MCF 10A (cell line): ENCODE measurements at regions of chr19 and their contacts with region 1.

Region 1: DNA sequence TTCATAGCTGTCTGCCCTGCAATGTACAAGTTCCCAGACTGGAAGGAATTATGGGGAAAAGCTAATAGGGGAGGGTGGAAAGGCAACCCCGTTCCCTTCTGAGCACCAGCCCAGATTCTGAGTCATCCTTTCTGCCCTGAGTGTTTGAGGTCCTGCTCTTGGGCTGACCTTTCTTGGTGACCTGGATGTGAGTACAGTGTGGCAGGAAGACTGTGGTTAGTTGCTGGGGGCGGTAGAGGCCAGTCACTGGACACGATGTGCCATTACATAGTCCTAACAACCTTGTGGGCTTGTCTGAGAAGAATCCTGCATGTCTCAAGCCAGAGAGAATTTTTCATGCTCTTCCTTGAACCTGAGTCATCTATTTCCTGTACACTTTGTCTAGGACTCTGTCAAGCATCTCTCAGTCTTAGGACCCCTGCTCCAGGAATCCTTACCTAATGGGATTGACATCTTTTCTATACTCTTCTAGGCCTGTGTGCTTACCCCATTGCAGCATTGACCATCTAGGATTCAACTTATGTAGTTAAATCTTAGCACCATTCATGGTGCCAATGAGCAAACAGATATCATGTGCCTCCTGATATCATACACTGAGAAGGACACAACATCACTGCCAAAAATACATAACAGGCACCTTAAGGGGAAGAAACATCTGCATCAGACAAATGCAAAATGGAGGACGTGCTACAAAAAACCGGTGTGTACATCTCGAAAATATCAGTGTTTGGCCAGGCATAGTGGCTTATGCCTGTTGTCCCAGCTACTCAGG is 8.1 kb upstream of the ANGPTL4 start:
- DNase-seq: peak; percentile 99
- H3K4me3 Mint-ChIP-seq: no peak overlapping the region
- H3K27ac Mint-ChIP-seq: peak overlapping the region; percentile 21
- H3K4me1 Mint-ChIP-seq: peaks cover 20% of the 10 kb centered on the region
- H3K27me3 Mint-ChIP-seq: no peaks in the 10 kb centered on the region
- CTCF ChIP-seq: no peak

Region 2: GRCh38 chr19:8342684-8343482 is 12.9 kb before region 1 on chr19 and contains the start of gene KANK3:
- CTCF ChIA-PET with region 1: interaction called, 20 read pairs
- POLR2A ChIA-PET with region 1: no interaction called
- intact Hi-C with region 1: no loop called
- DNase-seq: no peak
- H3K4me3 Mint-ChIP-seq: no peak within 1 kb of the TSS
- H3K27ac Mint-ChIP-seq: no peak within 1 kb of the TSS
- H3K4me1 Mint-ChIP-seq: no peaks in the 10 kb centered on the region
- H3K27me3 Mint-ChIP-seq: no peaks in the 10 kb centered on the region
- CTCF ChIP-seq: no peak
- total RNA-seq, gene KANK3: 0.79 and 1.2 TPM in 2 replicates

Region 3: DNA sequence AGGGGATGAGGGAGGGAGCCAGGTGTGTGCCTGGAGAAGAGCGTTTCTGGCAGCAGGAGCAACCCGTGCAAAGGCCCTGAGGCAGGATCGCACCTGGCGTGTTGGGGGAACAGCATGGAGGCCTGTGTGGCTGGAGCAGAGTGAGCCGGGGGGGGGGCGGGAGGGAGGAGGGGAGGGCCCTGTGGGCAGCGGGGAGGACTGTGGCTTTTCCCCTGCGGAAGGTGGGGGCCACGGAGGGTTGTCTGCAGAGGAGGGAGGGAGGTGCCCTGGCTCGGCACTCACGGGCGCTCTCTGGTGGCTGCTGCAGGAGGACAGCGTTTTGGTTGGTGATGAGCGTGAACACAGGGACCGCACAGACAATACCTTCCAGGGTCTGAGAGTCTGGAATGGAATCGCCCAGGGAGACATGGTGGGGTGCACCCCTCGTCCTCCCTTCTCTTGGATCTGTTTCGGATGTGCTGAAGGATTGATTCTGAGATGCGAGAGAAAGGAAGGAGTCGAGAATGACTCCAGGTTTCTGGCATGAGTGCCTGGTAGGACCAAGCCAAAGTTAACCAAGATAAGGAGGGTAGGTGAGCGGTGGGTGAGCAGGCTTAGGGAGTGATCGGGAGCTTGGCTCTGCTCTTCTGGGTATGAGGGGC is 40.9 kb after region 1 on chr19:
- CTCF ChIA-PET with region 1: interaction called, 72 read pairs
- POLR2A ChIA-PET with region 1: interaction called, 6 read pairs
- intact Hi-C with region 1: loop called (anchors 1 kb)
- DNase-seq: peak; percentile 68
- H3K4me3 Mint-ChIP-seq: no peak overlapping the region
- H3K27ac Mint-ChIP-seq: peak overlapping the region; percentile 81
- H3K4me1 Mint-ChIP-seq: peaks cover 30% of the 10 kb centered on the region
- H3K27me3 Mint-ChIP-seq: no peaks in the 10 kb centered on the region
- CTCF ChIP-seq: peak; percentile 65

Region 4: DNA sequence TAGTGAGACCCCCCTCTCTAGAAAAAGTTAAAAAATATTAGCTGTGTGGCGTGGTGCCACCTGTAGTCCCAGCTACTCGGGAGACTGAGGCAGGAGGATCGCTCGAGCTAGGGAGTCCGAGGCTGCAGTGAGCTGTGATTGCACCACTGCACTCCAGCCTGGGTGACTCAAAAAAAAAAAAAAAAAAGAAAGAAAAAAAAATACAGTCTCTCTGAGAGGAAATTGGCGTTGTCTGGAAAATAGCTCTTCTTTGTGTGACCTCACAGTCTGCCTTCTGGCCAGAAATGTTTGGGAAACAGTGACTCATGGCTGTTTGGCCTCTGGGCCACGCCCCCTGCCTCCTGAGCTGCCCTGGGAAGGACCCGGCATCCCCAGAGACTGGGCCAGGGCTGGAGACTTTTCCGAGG is 68.0 kb after region 1 on chr19:
- CTCF ChIA-PET with region 1: interaction called, 13 read pairs
- POLR2A ChIA-PET with region 1: no interaction called
- intact Hi-C with region 1: no loop called
- DNase-seq: peak; percentile 99
- H3K4me3 Mint-ChIP-seq: no peak overlapping the region
- H3K27ac Mint-ChIP-seq: peak overlapping the region; percentile 57
- H3K4me1 Mint-ChIP-seq: no peaks in the 10 kb centered on the region
- H3K27me3 Mint-ChIP-seq: no peaks in the 10 kb centered on the region
- CTCF ChIP-seq: no peak

Region 5: DNA sequence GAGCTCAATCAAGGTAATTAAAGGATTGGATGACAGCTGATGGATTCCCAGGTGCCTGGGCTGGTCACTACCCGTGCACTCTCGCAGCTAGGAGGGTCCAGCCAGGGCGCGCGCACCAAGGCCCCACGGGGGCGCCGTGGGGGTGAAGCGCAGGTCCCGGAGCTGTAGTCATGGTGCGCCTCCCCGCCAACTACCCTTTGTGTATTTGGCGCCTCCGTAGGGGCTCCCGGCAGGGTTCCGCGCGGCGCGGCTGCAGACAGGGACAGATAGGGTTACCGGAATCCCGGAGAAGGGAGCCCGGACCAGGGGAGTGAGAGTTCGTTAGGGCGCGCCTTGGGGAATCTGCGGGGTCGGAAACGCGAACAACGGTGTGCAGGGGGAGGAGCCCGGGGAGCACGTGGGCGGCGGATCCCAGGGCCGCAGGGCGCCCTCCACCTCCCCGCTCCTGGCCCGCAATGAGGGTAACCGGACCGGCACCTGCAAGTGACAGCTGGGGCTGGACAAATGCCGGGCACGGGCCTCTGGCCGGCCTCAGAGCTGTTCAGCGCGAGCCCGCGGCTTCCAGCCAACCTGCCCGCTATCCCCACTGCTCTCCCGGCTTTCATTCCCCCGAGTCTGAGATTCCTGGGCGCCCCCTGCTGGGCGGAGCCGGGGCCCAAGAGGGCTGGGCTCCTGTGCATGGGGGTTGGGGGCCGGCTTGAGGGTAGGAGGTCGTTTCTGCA is 150.0 kb after region 1 on chr19:
- CTCF ChIA-PET with region 1: interaction called, 28 read pairs
- POLR2A ChIA-PET with region 1: interaction called, 9 read pairs
- intact Hi-C with region 1: loop called (anchors 1 kb)
- DNase-seq: peak; percentile 78
- H3K4me3 Mint-ChIP-seq: peak overlapping the region; percentile 86
- H3K27ac Mint-ChIP-seq: no peak overlapping the region
- H3K4me1 Mint-ChIP-seq: peaks cover 5% of the 10 kb centered on the region
- H3K27me3 Mint-ChIP-seq: no peaks in the 10 kb centered on the region
- CTCF ChIP-seq: peak; percentile 83

Region 6: DNA sequence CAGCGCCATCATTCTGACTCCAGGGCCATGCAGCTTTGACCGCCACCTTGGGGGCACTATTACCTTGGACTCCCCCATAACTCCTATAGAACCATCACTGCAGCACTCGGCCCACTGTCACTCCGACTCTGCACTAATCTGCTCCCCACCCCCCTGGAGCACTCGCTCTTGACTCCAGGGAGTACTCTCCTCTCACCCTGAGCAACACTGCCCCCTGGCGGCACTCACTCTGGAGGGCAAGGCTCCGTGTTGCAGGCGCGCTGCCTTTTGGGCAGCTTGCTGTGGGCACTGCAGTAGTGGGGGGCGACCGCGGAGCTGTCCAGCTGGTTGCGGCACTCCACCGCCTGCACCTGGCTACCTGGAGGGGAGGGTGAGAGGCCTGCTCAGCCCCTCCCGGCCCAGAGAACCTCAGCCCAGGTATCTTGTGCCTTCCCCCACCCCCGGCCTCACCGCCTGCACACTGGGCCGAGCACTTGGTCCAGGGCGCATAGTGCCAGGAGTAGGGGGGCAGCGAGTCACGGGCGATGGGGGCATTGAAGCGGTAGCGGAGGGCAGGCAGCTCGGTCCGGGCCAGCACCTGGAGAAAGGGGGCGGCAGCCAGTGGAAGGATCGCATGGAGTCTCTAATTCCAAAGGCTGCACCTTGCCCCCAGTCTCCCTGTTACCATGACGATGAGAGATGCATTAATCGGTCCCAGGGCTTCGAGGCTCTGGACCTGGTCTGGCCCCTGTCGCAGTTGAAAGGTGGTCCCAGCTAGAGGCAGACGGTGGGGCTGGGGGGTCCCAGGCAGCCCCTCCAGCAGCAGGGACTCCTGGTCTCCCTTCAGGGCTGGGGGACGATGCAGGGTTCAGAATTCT is 230.3 kb after region 1 on chr19:
- CTCF ChIA-PET with region 1: interaction called, 45 read pairs
- POLR2A ChIA-PET with region 1: no interaction called
- intact Hi-C with region 1: no loop called
- DNase-seq: peak; percentile 65
- H3K4me3 Mint-ChIP-seq: no peak overlapping the region
- H3K27ac Mint-ChIP-seq: no peak overlapping the region
- H3K4me1 Mint-ChIP-seq: no peaks in the 10 kb centered on the region
- H3K27me3 Mint-ChIP-seq: peaks cover 10% of the 10 kb centered on the region
- CTCF ChIP-seq: peak; percentile 59